ENCODE measurements at regions of chr1 and their contacts with region 1.

Region 1: GRCh38 chr1:24391882-24392603 is 21.5 kb downstream of the STPG1 start:
- DNase-seq: peak; percentile 59 to 63
- ATAC-seq: peak; percentile 85 to 91
- H3K4me3 ChIP-seq: no peak overlapping the region
- H3K27ac ChIP-seq: peak overlapping the region; percentile 56 to 81; a peak in 5 of 6 replicates
- H3K4me1 ChIP-seq: peaks cover 55% of the 10 kb centered on the region
- CTCF ChIP-seq: peak; percentile 76
- EP300 ChIP-seq: no peak
- POLR2A ChIP-seq: no peak
- RAD21 ChIP-seq: peak; percentile 85 to 89

Region 2: DNA sequence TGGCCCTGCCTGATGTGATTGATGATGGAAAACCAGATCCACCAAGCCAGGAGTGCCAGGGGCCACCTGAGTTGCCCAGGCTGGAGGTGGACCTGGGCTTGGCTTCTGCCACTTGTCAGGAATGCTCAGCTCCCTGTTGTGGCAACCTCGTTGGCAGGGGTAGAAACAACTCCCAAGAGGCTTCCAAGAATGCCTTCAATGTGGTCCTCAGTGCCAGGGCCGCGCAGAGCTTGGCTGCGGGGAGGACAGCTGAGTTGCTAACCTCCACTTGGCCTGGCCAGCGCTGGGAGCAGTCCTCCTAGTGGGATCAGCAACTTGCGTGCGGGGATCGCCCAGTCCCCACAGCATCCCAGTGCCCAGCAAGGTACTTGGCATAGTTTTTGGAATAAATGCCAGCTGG is 289.1 kb before region 1 on chr1:
- CTCF ChIA-PET with region 1: interaction called, 10 read pairs
- POLR2A ChIA-PET with region 1: no interaction called
- DNase-seq: peak in 1 of 2 experiments; percentile 23
- ATAC-seq: 0 out of 6 replicates have a peak, but pooled peaks of 1 of the 2 experiments have one; percentile 8
- H3K4me3 ChIP-seq: no peak overlapping the region
- H3K27ac ChIP-seq: no peak overlapping the region
- H3K4me1 ChIP-seq: peaks cover 20% of the 10 kb centered on the region
- CTCF ChIP-seq: no peak
- EP300 ChIP-seq: no peak
- POLR2A ChIP-seq: no peak
- RAD21 ChIP-seq: no peak

Region 3: DNA sequence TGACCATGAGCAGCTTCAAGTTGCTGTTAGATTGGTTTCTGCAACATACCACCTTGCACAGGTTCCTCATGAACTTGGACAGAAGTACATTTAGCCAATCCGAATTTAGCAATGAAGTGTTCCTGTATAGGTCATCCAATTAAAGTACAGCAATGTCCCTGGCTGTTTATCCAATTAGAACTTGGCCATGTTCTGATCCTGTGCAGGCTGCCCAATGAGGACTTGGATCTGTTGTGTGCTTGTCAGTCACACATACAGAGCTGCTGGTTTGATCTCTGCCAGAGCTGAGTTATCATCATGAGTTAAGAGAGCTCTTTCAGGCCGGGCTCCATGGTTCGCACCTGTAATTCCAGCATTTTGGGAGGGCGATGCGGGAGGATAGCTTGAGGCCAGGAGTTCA is 183.0 kb before region 1 on chr1:
- CTCF ChIA-PET with region 1: interaction called, 79 read pairs
- POLR2A ChIA-PET with region 1: no interaction called
- DNase-seq: no peak
- ATAC-seq: no peak
- H3K4me3 ChIP-seq: no peak overlapping the region
- H3K27ac ChIP-seq: no peak overlapping the region
- H3K4me1 ChIP-seq: peaks cover 5% of the 10 kb centered on the region; the same call in 1 of the 3 replicates
- CTCF ChIP-seq: no peak
- EP300 ChIP-seq: no peak
- POLR2A ChIP-seq: no peak
- RAD21 ChIP-seq: no peak

Region 4: GRCh38 chr1:24283326-24284155 is 108.5 kb before region 1 on chr1:
- CTCF ChIA-PET with region 1: interaction called, 16 read pairs
- POLR2A ChIA-PET with region 1: no interaction called
- DNase-seq: peak; percentile 28 to 89
- ATAC-seq: peak; percentile 89 to 92
- H3K4me3 ChIP-seq: no peak overlapping the region
- H3K27ac ChIP-seq: peak overlapping the region; percentile 64 to 86
- H3K4me1 ChIP-seq: peaks cover 35% of the 10 kb centered on the region
- CTCF ChIP-seq: no peak
- EP300 ChIP-seq: peak; percentile 47 to 51; a peak in 2 of 5 replicates
- POLR2A ChIP-seq: no peak
- RAD21 ChIP-seq: no peak

Region 5: GRCh38 chr1:24321697-24322469 is 70.2 kb before region 1 on chr1:
- CTCF ChIA-PET with region 1: interaction called, 30 read pairs
- POLR2A ChIA-PET with region 1: no interaction called
- DNase-seq: no peak
- ATAC-seq: no peak
- H3K4me3 ChIP-seq: no peak overlapping the region
- H3K27ac ChIP-seq: no peak overlapping the region
- H3K4me1 ChIP-seq: peaks cover 25% of the 10 kb centered on the region
- CTCF ChIP-seq: no peak
- EP300 ChIP-seq: no peak
- POLR2A ChIP-seq: no peak
- RAD21 ChIP-seq: no peak

Region 6: DNA sequence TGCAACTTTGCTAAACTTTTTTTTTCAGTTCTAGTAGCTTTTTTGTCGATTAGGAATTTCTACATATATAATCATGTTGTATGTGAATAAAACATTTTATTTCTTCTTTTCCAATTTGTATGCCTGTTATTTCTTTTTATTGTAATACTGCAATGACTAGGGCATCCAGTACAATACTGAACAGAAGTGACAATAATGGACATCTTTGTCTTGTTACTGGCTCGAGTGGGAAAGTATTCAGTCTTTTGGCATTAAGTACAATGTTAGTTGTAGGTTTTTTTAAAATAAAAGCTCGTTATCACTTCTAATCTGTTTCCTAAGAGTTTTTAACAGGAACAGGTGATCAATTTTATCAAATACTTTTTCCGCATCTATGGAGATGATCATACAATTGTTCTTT is 11.8 kb after region 1 on chr1:
- CTCF ChIA-PET with region 1: interaction called, 86 read pairs
- POLR2A ChIA-PET with region 1: no interaction called
- DNase-seq: no peak
- ATAC-seq: no peak
- H3K4me3 ChIP-seq: no peak overlapping the region
- H3K27ac ChIP-seq: no peak overlapping the region
- H3K4me1 ChIP-seq: no peaks in the 10 kb centered on the region
- CTCF ChIP-seq: no peak
- EP300 ChIP-seq: no peak
- POLR2A ChIP-seq: no peak
- RAD21 ChIP-seq: no peak